AG04450 (cell line): ENCODE measurements at regions of chr9 and their contacts with region 1.

Region 1: DNA sequence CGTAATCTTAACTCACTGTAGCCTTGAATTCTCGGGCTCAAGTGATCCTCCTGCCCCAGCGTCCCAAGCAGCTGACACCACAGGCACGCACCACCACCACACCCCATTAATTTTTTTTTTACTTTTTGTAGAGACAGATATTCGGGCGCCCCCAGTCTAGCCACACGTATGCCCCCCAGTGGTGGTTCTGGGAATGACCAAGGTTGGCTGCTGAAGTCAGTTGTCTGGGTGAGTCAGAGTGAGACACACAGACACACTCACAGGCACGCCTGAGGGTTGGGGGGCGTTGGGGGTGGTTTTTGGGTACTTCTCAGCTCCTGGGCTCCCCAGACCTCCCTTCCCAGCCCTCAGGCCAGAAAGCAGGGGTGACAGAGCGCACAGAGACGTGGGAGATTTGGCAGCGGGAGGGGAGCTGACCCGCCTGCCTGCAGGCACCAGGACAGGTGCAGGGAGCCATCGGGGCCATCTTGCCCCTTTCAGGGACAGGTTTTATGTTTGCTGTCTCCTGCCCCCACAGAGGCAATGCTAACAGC is 4.2 kb upstream of the ENTPD8 start:
- DNase-seq: peak; percentile 26
- H3K4me3 ChIP-seq: no peak overlapping the region
- H3K27ac ChIP-seq: no peak overlapping the region
- H3K27me3 ChIP-seq: peaks cover 6% of the 10 kb centered on the region
- CTCF ChIP-seq: peak; percentile 86

Region 2: GRCh38 chr9:137217276-137218211 is 227.8 kb before region 1 on chr9:
- CTCF ChIA-PET with region 1: no interaction called
- POLR2A ChIA-PET with region 1: no interaction called
- DNase-seq: no peak
- H3K4me3 ChIP-seq: no peak overlapping the region
- H3K27ac ChIP-seq: no peak overlapping the region
- H3K27me3 ChIP-seq: no peaks in the 10 kb centered on the region
- CTCF ChIP-seq: no peak

Region 3: GRCh38 chr9:137286975-137287383 is 158.4 kb before region 1 on chr9:
- CTCF ChIA-PET with region 1: interaction called, 11 read pairs
- POLR2A ChIA-PET with region 1: interaction called, 5 read pairs
- DNase-seq: no peak
- H3K4me3 ChIP-seq: no peak overlapping the region
- H3K27ac ChIP-seq: no peak overlapping the region
- H3K27me3 ChIP-seq: no peaks in the 10 kb centered on the region
- CTCF ChIP-seq: peak; percentile 60

Region 4: GRCh38 chr9:137423004-137423874 is 22.1 kb before region 1 on chr9 and contains the starts of genes EXD3 and NOXA1:
- CTCF ChIA-PET with region 1: interaction called, 29 read pairs
- POLR2A ChIA-PET with region 1: interaction called, 8 read pairs
- DNase-seq: peak; percentile 71
- H3K4me3 ChIP-seq: peak within 1 kb of the TSS; percentile 64
- H3K27ac ChIP-seq: no peak within 1 kb of the TSS
- H3K27me3 ChIP-seq: peaks cover 4% of the 10 kb centered on the region
- CTCF ChIP-seq: peak; percentile 53
- polyA plus RNA-seq, gene EXD3: 4.0 and 5.4 TPM in 2 replicates
- polyA plus RNA-seq, gene NOXA1: 0.06 and 0.09 TPM in 2 replicates

Region 5: DNA sequence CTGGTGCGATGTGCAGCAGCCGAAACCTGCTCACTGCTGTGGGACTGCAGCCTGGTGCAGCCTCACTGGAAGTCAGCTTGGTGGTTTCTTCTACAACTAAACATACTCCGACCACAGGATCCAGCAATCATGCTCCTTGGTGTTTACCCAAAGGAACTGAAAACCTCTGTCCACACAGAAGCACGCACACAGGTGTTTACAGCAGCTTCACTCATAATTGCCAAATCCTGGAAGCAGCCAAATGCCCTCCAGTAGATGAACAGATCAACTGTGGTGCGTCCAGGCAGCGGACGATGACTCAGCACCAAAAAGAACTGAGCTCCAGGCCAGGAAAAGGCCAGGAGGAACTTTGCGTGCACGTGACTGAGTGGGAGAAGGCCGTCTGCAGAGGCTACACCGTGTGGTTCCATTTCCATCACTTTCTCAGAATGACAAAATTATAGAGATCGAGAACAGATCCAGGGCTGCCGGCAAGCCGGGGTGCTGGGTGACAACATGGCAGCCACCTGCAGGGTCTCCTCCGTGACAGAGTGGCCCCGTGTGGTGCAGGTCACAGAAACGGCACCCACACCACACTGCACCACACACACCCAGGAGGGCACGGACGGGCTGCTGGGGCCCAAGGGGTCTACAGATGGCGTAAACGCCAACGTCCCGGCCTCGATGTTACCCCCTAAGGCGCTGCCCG is 36.9 kb after region 1 on chr9:
- CTCF ChIA-PET with region 1: no interaction called
- POLR2A ChIA-PET with region 1: no interaction called
- DNase-seq: peak; percentile 83
- H3K4me3 ChIP-seq: no peak overlapping the region
- H3K27ac ChIP-seq: peak overlapping the region; percentile 75
- H3K27me3 ChIP-seq: peaks cover 6% of the 10 kb centered on the region
- CTCF ChIP-seq: no peak

Region 6: GRCh38 chr9:137534256-137535117 is 89.1 kb after region 1 on chr9:
- CTCF ChIA-PET with region 1: no interaction called
- POLR2A ChIA-PET with region 1: no interaction called
- DNase-seq: no peak
- H3K4me3 ChIP-seq: no peak overlapping the region
- H3K27ac ChIP-seq: no peak overlapping the region
- H3K27me3 ChIP-seq: no peaks in the 10 kb centered on the region
- CTCF ChIP-seq: peak; percentile 79